WTC11 (cell line): ENCODE measurements at regions of chr2 and their contacts with region 1.

Region 1: GRCh38 chr2:165933211-165933610 is 20.4 kb downstream of the TTC21B start:
- DNase-seq: no peak
- ATAC-seq: no peak
- H3K4me3 Mint-ChIP-seq: no peak overlapping the region
- H3K27ac Mint-ChIP-seq: no peak overlapping the region
- H3K4me1 Mint-ChIP-seq: peaks cover 9% of the 10 kb centered on the region
- H3K27me3 Mint-ChIP-seq: no peaks in the 10 kb centered on the region
- CTCF ChIP-seq: no peak

Region 2: DNA sequence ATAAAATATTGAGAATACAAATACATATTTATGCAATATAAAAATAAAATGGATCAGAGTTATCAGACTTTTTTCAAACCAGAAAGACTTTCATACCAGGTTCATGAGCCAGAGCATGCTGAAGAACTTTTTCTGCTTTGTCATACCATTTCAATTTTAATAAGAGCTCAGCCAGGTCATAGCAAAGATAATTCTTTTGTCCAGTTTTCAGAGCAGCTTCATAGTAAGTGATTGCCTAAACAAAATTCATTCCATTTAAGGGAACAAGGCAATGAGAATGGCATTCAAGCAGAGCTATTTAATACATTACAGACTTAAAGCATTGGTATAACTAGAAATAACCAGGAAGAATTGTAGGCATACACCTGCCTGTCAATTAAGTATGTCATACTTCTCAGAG is 22.0 kb before region 1 on chr2:
- CTCF ChIA-PET with region 1: no interaction called
- POLR2A ChIA-PET with region 1: interaction called, 10 read pairs
- DNase-seq: no peak
- ATAC-seq: no peak
- H3K4me3 Mint-ChIP-seq: no peak overlapping the region
- H3K27ac Mint-ChIP-seq: no peak overlapping the region
- H3K4me1 Mint-ChIP-seq: no peaks in the 10 kb centered on the region
- H3K27me3 Mint-ChIP-seq: no peaks in the 10 kb centered on the region
- CTCF ChIP-seq: no peak

Region 3: DNA sequence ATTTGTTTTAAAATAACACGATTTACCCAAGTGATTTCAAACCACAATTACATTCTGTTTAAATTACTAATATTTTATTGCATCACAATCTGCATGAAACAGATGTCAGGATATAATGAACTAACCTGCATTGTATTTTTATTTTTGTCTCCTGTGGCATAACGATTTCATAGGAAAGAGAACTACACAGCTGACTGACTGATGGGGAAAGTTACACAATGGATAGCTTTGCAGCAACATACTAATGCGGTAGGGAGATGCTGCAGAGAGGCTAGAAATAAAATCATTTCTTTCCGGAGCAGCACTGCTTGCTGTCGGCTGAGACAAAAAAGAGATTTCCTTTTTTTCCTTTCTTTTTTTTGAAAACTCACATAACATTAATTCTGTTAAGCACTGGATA is 157.7 kb after region 1 on chr2:
- CTCF ChIA-PET with region 1: no interaction called
- POLR2A ChIA-PET with region 1: no interaction called
- DNase-seq: no peak
- ATAC-seq: no peak; the same call in 1 of the 2 replicates
- H3K4me3 Mint-ChIP-seq: no peak overlapping the region
- H3K27ac Mint-ChIP-seq: peak overlapping the region; percentile 15; the same call in 1 of the 2 replicates
- H3K4me1 Mint-ChIP-seq: peaks cover 10% of the 10 kb centered on the region
- H3K27me3 Mint-ChIP-seq: no peaks in the 10 kb centered on the region
- CTCF ChIP-seq: no peak

Region 4: GRCh38 chr2:166197446-166197845 is 264.2 kb after region 1 on chr2:
- CTCF ChIA-PET with region 1: no interaction called
- POLR2A ChIA-PET with region 1: no interaction called
- DNase-seq: no peak
- ATAC-seq: no peak
- H3K4me3 Mint-ChIP-seq: no peak overlapping the region
- H3K27ac Mint-ChIP-seq: no peak overlapping the region
- H3K4me1 Mint-ChIP-seq: no peaks in the 10 kb centered on the region
- H3K27me3 Mint-ChIP-seq: no peaks in the 10 kb centered on the region
- CTCF ChIP-seq: no peak